ENCODE measurements at regions of chr9 and their contacts with region 1.

Region 1: DNA sequence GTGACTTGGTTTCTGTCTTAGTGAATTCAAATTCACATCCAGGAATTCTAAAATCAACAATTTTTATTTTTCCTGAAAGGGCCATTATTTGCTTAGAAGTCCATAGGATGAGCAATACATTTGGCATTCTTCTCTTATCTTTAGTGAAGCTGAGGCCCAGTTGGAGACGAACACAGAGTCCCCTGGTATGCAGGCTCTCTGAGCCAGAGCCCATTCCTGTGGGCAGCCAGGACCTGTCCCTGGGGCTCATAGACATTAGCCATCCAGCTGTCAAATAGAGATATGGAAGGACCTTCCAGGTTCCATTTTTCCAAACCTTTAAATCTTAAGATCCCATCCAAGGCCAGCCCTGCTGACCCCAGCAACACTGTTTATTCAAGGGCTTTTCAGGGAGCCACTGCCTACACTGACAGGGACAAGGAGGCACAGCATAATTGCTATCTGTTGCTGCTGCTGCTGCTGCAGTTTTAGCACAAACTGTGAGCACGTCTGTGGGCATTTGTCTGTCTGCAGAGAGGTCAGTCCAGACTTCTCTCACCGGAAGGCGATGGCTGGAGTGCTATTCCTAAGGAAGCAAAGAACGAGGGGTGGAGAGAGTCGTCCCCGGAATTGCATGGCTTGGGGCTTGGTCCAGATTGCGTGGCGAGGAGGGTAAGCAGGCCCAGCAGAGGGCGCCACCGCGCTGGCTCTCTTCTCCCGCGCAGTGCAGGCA is 639.0 kb downstream of the CCDC171 start:
- DNase-seq: peak; percentile 72 to 86 (median 81)
- ATAC-seq: peak; percentile 88 to 98 (median 96)
- H3K4me3 ChIP-seq: peak overlapping the region in 1 of 12 donors; percentile 10
- H3K27ac ChIP-seq: peak overlapping the region in 5 of 12 donors; percentile 11 to 31 (median 28)
- H3K4me1 ChIP-seq: peaks cover 0 to 13% (median 2%) of the 10 kb centered on the region in 12 donors
- H3K27me3 ChIP-seq: no peaks in the 10 kb centered on the region
- CTCF ChIP-seq: peak; percentile 60 to 84 (median 80)
- POLR2A ChIP-seq: no peak

Region 2: DNA sequence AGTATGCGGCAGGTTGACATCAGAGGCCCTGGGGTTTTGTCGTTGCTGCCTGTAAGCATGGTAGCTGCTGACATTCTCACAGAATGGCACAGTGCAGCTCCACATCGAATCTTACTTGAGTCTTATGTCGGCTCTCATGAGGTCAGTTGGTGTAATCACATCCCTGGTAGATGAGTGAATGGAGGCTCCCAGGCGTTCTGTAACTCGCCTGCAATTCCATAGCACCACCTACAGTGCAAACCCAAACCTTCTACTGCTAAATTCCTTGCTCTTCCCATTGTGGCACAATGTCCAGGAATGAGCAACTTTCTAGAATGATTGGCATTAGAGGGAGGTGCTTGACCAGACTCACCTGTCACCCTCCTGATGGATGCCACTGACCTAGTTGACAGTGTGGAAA is 60.6 kb before region 1 on chr9:
- intact Hi-C with region 1: no loop called
- DNase-seq: no peak
- ATAC-seq: no peak
- H3K4me3 ChIP-seq: no peak overlapping the region
- H3K27ac ChIP-seq: no peak overlapping the region
- H3K4me1 ChIP-seq: peaks cover 0 to 4% (median 0%) of the 10 kb centered on the region in 12 donors
- H3K27me3 ChIP-seq: peaks cover 0 to 3% (median 0%) of the 10 kb centered on the region in 9 donors
- CTCF ChIP-seq: peak in 1 of 12 donors; percentile 9
- POLR2A ChIP-seq: no peak

Region 3: GRCh38 chr9:16344343-16344742 is 152.5 kb after region 1 on chr9:
- intact Hi-C with region 1: loop called in 2 of 10 experiments (anchors 5 to 10 kb)
- DNase-seq: no peak
- ATAC-seq: peak in 2 of 4 donors; percentile 58 to 85
- H3K4me3 ChIP-seq: no peak overlapping the region
- H3K27ac ChIP-seq: peak overlapping the region in 2 of 12 donors; percentile 26 to 61
- H3K4me1 ChIP-seq: peaks cover 0 to 22% (median 8%) of the 10 kb centered on the region in 12 donors
- H3K27me3 ChIP-seq: no peaks in the 10 kb centered on the region
- CTCF ChIP-seq: no peak
- POLR2A ChIP-seq: no peak

Region 4: GRCh38 chr9:16515879-16516301 is 324.0 kb after region 1 on chr9:
- intact Hi-C with region 1: loop called in 1 of 10 experiments (anchors 10 kb)
- DNase-seq: no peak
- ATAC-seq: peak in 3 of 4 donors; percentile 80 to 82 (median 80)
- H3K4me3 ChIP-seq: no peak overlapping the region
- H3K27ac ChIP-seq: peak overlapping the region in 4 of 12 donors; percentile 37 to 66 (median 44)
- H3K4me1 ChIP-seq: peaks cover 0 to 22% (median 2%) of the 10 kb centered on the region in 12 donors
- H3K27me3 ChIP-seq: peaks cover 0 to 3% (median 0%) of the 10 kb centered on the region in 9 donors
- CTCF ChIP-seq: no peak
- POLR2A ChIP-seq: no peak

Region 5: GRCh38 chr9:16726718-16727451 is 535.0 kb after region 1 on chr9:
- intact Hi-C with region 1: loop called in 1 of 10 experiments (anchors 10 kb)
- DNase-seq: peak; percentile 58 to 82 (median 78)
- ATAC-seq: peak; percentile 25 to 92 (median 86)
- H3K4me3 ChIP-seq: peak overlapping the region; percentile 18 to 70 (median 58)
- H3K27ac ChIP-seq: peak overlapping the region; percentile 52 to 88 (median 79)
- H3K4me1 ChIP-seq: peaks cover 0 to 15% (median 1%) of the 10 kb centered on the region in 12 donors
- H3K27me3 ChIP-seq: peaks cover 0 to 30% (median 16%) of the 10 kb centered on the region in 9 donors
- CTCF ChIP-seq: no peak
- POLR2A ChIP-seq: peak in 1 of 2 donors; percentile 34

Region 6: GRCh38 chr9:17462869-17463464 is 1271.1 kb after region 1 on chr9:
- intact Hi-C with region 1: loop called in 1 of 10 experiments (anchors 10 kb)
- DNase-seq: no peak
- ATAC-seq: no peak
- H3K4me3 ChIP-seq: no peak overlapping the region
- H3K27ac ChIP-seq: no peak overlapping the region
- H3K4me1 ChIP-seq: no peaks in the 10 kb centered on the region
- H3K27me3 ChIP-seq: no peaks in the 10 kb centered on the region
- CTCF ChIP-seq: peak; percentile 51 to 88 (median 72)
- POLR2A ChIP-seq: no peak

Measured in heart left ventricle (tissue), 16 donors.